CD4-positive, alpha-beta T cell (primary cell): ENCODE measurements at regions of chr22 and their contacts with region 1.

Region 1: GRCh38 chr22:21982338-21982965 is at the start of gene TOP3B:
- DNase-seq: peak; percentile 69 to 89 (median 77)
- ATAC-seq: peak; percentile 94
- H3K4me3 ChIP-seq: peak within 1 kb of the TSS; percentile 80
- H3K4me3 Mint-ChIP-seq: peak within 1 kb of the TSS; percentile 94
- H3K27ac ChIP-seq: peak within 1 kb of the TSS; percentile 55 to 76
- H3K27ac Mint-ChIP-seq: peak within 1 kb of the TSS; percentile 84
- H3K4me1 ChIP-seq: peaks cover 14% of the 10 kb centered on the region
- H3K4me1 Mint-ChIP-seq: peaks cover 49% of the 10 kb centered on the region
- H3K27me3 ChIP-seq: no peaks in the 10 kb centered on the region
- H3K27me3 Mint-ChIP-seq: no peaks in the 10 kb centered on the region
- CTCF ChIP-seq: no peak
- total RNA-seq, gene TOP3B: 60.2 to 62.8 TPM

Region 2: GRCh38 chr22:21972293-21972779 is 10.1 kb before region 1 on chr22:
- CTCF ChIA-PET with region 1: interaction called, 17 read pairs
- POLR2A ChIA-PET with region 1: interaction called, 12 read pairs
- intact Hi-C with region 1: no loop called
- DNase-seq: peak in 13 of 14 experiments; percentile 29 to 68 (median 45)
- ATAC-seq: peak; percentile 76
- H3K4me3 ChIP-seq: no peak overlapping the region
- H3K4me3 Mint-ChIP-seq: no peak overlapping the region
- H3K27ac ChIP-seq: no peak overlapping the region
- H3K27ac Mint-ChIP-seq: no peak overlapping the region
- H3K4me1 ChIP-seq: peaks cover 4% of the 10 kb centered on the region
- H3K4me1 Mint-ChIP-seq: peaks cover 5% of the 10 kb centered on the region
- H3K27me3 ChIP-seq: no peaks in the 10 kb centered on the region
- H3K27me3 Mint-ChIP-seq: no peaks in the 10 kb centered on the region
- CTCF ChIP-seq: peak; percentile 87